ENCODE measurements at regions of chr10 and their contacts with region 1.

Region 1: GRCh38 chr10:6678211-6678803 is 98.2 kb upstream of the PRKCQ start:
- DNase-seq: peak; percentile 33 to 68 (median 50)
- ATAC-seq: peak in 1 of 2 donors; percentile 50
- H3K4me3 ChIP-seq: no peak overlapping the region
- H3K27ac ChIP-seq: no peak overlapping the region
- H3K4me1 ChIP-seq: no peaks in the 10 kb centered on the region
- H3K27me3 ChIP-seq: no peaks in the 10 kb centered on the region

Region 2: DNA sequence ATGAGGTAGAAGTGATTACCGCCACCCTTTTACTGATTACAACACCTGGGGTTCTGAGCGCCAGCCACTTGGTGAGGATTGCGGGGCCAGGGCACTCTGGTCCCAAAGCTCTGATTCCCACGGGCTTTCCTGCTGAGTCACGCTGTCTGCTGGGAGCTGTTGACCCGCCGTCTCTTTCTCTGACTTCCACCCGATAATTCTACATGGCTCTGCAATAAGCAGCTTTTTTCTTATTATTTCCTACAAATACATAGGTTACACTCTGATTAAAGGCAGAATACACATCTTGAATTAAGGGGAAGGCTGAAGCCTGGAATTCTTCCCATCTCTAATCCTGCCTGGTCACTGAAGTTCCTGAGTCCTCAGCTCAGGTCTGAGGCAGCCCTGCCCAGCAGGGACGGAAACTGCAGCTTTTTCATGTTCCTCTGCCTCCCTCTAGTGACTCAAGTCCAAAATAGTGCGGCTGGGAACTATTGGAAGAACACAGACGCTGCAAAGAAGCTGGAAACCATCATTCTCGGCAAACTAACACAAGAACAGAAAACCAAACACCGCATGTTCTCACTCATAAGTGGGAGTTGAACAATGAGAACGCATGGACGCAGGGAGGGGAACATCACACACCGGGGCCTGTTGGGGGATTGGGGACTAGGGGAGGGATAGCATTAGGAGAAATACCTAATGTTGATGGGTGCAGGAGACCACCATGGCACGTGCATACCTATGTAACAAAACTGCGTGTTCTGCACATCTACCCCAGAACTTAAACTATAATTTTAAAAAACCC is 276.6 kb before region 1 on chr10:
- intact Hi-C with region 1: no loop called
- DNase-seq: peak; percentile 72 to 86 (median 81)
- ATAC-seq: peak; percentile 95 to 96
- H3K4me3 ChIP-seq: peak overlapping the region; percentile 72
- H3K27ac ChIP-seq: no peak overlapping the region
- H3K4me1 ChIP-seq: no peaks in the 10 kb centered on the region
- H3K27me3 ChIP-seq: no peaks in the 10 kb centered on the region

Region 3: GRCh38 chr10:6416892-6417512 is 261.3 kb before region 1 on chr10:
- intact Hi-C with region 1: loop called in 2 of 4 experiments (anchors 5 to 10 kb)
- DNase-seq: no peak
- ATAC-seq: peak; percentile 62 to 66
- H3K4me3 ChIP-seq: no peak overlapping the region
- H3K27ac ChIP-seq: no peak overlapping the region
- H3K4me1 ChIP-seq: no peaks in the 10 kb centered on the region
- H3K27me3 ChIP-seq: no peaks in the 10 kb centered on the region

Region 4: DNA sequence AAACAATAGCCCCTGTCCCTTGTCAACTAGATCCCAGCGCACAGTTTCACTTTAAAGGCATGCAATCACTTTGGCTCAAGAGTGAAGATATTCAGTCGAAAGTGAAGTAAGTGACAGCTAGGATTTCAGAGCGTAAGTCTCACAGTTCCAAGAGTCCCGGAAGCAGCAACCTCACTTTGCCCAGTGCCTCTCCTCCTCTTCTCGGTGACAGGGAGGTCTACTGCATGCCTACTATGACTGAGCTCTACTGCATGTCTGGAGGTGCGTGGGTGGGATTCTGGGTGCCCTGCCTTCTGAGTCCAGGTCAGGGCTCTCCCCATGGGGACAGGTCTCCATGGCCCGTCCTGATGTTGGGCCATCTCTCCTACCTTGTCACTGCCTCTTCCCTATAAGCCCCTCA is 115.2 kb before region 1 on chr10:
- intact Hi-C with region 1: no loop called
- DNase-seq: no peak
- ATAC-seq: no peak
- H3K4me3 ChIP-seq: no peak overlapping the region
- H3K27ac ChIP-seq: no peak overlapping the region
- H3K4me1 ChIP-seq: no peaks in the 10 kb centered on the region
- H3K27me3 ChIP-seq: no peaks in the 10 kb centered on the region

Region 5: DNA sequence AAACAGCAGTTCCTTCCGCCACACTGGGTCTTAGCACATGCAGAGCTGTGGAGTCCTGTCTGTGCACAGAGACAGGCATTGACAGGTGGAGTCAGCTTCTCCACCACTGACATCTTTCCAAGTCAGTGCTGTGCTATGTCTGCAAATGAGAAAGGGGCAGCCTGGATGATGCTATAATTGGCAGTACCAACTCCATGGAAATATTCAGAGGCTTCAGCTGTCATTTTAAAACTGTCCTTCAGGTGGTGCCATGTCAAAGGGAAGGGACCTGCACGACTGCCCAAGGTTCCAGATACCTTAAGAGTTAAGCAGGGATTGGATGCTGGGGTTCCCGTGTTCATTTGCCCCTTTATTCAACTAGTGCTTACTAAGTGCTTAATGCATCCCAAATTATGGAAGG is 159.8 kb after region 1 on chr10:
- intact Hi-C with region 1: no loop called
- DNase-seq: no peak
- ATAC-seq: no peak
- H3K4me3 ChIP-seq: no peak overlapping the region
- H3K27ac ChIP-seq: no peak overlapping the region
- H3K4me1 ChIP-seq: no peaks in the 10 kb centered on the region
- H3K27me3 ChIP-seq: no peaks in the 10 kb centered on the region